ENCODE measurements at regions of chr2 and their contacts with region 1.

Region 1: GRCh38 chr2:16487686-16488085 is 177.9 kb downstream of the CYRIA start:
- ATAC-seq: peak in 2 of 8 experiments; percentile 34 to 57
- H3K4me3 ChIP-seq: no peak overlapping the region
- H3K27ac ChIP-seq: no peak overlapping the region
- H3K4me1 ChIP-seq: peaks cover 0 to under 1% of the 10 kb centered on the region in 2 donors

Region 2: GRCh38 chr2:15673927-15674636 is 813.6 kb before region 1 on chr2:
- in situ Hi-C with region 1: loop called in 1 of 9 experiments (anchors 25 kb)
- ATAC-seq: peak; percentile 30 to 85 (median 81)
- H3K4me3 ChIP-seq: no peak overlapping the region
- H3K27ac ChIP-seq: no peak overlapping the region
- H3K4me1 ChIP-seq: peaks cover 6 to 7% of the 10 kb centered on the region in 2 donors

Region 3: GRCh38 chr2:16394072-16394985 is 93.4 kb before region 1 on chr2:
- in situ Hi-C with region 1: no loop called
- ATAC-seq: peak in 5 of 8 experiments; percentile 94 to 96 (median 95)
- H3K4me3 ChIP-seq: no peak overlapping the region
- H3K27ac ChIP-seq: peak overlapping the region in 1 of 2 donors; percentile 35
- H3K4me1 ChIP-seq: peaks cover 14 to 15% of the 10 kb centered on the region in 2 donors

Measured in motor neuron (in vitro differentiated cells).